ENCODE measurements at regions of chr13 and their contacts with region 1.

Region 1: DNA sequence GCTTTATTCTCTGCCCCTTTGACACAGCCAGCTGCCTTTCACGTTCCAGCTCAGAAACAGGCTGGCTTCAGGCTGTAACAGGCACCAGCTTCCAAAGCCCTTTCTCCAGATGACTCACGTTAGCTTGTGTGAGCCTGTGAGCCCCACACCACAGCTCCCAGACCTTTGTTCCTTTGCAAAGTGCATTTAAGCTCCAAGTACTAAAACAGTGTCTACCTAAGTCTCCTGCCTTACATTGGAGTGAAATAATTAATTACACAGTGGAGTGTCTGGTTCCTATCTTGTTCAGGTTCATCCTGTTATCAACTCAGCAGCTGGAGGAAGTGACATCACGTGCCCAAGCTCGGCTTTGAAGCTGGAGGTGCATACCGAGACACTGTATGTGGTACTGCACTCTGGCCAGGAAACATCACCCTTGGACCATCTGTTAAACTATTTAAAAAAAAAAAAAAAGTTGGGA is 475.8 kb downstream of the FOXO1 start:
- DNase-seq: peak in 8 of 9 donors; percentile 36 to 87 (median 80)
- ATAC-seq: peak; percentile 49
- H3K4me3 ChIP-seq: peak overlapping the region; percentile 24
- H3K4me3 Mint-ChIP-seq: peak overlapping the region; percentile 74 to 89 (median 81)
- H3K27ac ChIP-seq: peak overlapping the region; percentile 63
- H3K27ac Mint-ChIP-seq: peak overlapping the region; percentile 96 to 100 (median 97)
- H3K4me1 ChIP-seq: peaks cover 55 to 69% of the 10 kb centered on the region in 2 donors
- H3K4me1 Mint-ChIP-seq: peaks cover 47 to 97% (median 87%) of the 10 kb centered on the region in 7 donors
- H3K27me3 ChIP-seq: no peaks in the 10 kb centered on the region
- H3K27me3 Mint-ChIP-seq: no peaks in the 10 kb centered on the region

Region 2: GRCh38 chr13:39876258-39876657 is 314.4 kb before region 1 on chr13:
- CTCF ChIA-PET with region 1: no interaction called
- POLR2A ChIA-PET with region 1: no interaction called
- intact Hi-C with region 1: no loop called
- DNase-seq: no peak
- ATAC-seq: no peak
- H3K4me3 ChIP-seq: no peak overlapping the region
- H3K4me3 Mint-ChIP-seq: no peak overlapping the region
- H3K27ac ChIP-seq: no peak overlapping the region
- H3K27ac Mint-ChIP-seq: no peak overlapping the region
- H3K4me1 ChIP-seq: no peaks in the 10 kb centered on the region
- H3K4me1 Mint-ChIP-seq: peaks cover 0 to 10% (median 9%) of the 10 kb centered on the region in 7 donors
- H3K27me3 ChIP-seq: no peaks in the 10 kb centered on the region
- H3K27me3 Mint-ChIP-seq: peaks cover 0 to 3% (median 2%) of the 10 kb centered on the region in 5 donors

Region 3: GRCh38 chr13:39942552-39943273 is 248.0 kb before region 1 on chr13:
- CTCF ChIA-PET with region 1: interaction called, 3 read pairs
- POLR2A ChIA-PET with region 1: interaction called, 3 read pairs
- intact Hi-C with region 1: loop called in 1 of 2 experiments (anchors 1 kb)
- DNase-seq: peak; percentile 41 to 71 (median 63)
- ATAC-seq: peak; percentile 98
- H3K4me3 ChIP-seq: no peak overlapping the region
- H3K4me3 Mint-ChIP-seq: peak overlapping the region in 2 of 10 donors; percentile 2 to 71
- H3K27ac ChIP-seq: no peak overlapping the region
- H3K27ac Mint-ChIP-seq: peak overlapping the region in 3 of 9 donors; percentile 1 to 63 (median 8)
- H3K4me1 ChIP-seq: no peaks in the 10 kb centered on the region
- H3K4me1 Mint-ChIP-seq: peaks cover 4 to 16% (median 11%) of the 10 kb centered on the region in 7 donors
- H3K27me3 ChIP-seq: no peaks in the 10 kb centered on the region
- H3K27me3 Mint-ChIP-seq: peaks cover 0 to 3% (median 0%) of the 10 kb centered on the region in 5 donors

Region 4: GRCh38 chr13:40126306-40127085 is 64.2 kb before region 1 on chr13:
- CTCF ChIA-PET with region 1: no interaction called
- POLR2A ChIA-PET with region 1: no interaction called
- intact Hi-C with region 1: loop called in 1 of 2 experiments (anchors 2 kb)
- DNase-seq: peak in 1 of 9 donors; percentile 16
- ATAC-seq: no peak
- H3K4me3 ChIP-seq: no peak overlapping the region
- H3K4me3 Mint-ChIP-seq: peak overlapping the region in 8 of 10 donors; percentile 5 to 78 (median 45)
- H3K27ac ChIP-seq: no peak overlapping the region
- H3K27ac Mint-ChIP-seq: peak overlapping the region in 4 of 9 donors; percentile 6 to 76 (median 30)
- H3K4me1 ChIP-seq: peaks cover 6 to 16% of the 10 kb centered on the region in 2 donors
- H3K4me1 Mint-ChIP-seq: peaks cover 24 to 60% (median 29%) of the 10 kb centered on the region in 7 donors
- H3K27me3 ChIP-seq: no peaks in the 10 kb centered on the region
- H3K27me3 Mint-ChIP-seq: no peaks in the 10 kb centered on the region

Region 5: DNA sequence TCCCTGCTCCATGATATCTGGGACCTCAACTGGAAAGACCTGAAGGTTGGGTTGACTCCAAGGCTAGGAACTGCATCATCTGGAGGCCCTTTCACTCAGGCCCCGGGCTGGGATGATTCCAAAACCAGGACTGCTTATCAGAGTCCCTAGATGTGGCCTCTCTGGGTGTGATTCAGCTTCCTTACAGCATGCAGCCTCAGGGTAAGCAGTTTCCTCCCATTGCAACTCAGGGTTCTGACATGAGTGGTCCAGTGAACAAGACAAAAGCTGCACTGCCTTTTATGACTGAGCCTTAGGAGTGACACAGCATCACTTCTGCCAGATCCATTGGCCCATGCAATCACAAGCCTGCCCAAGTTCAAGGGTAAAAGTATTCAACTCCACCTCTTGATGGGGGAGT is 32.5 kb before region 1 on chr13:
- CTCF ChIA-PET with region 1: no interaction called
- POLR2A ChIA-PET with region 1: no interaction called
- intact Hi-C with region 1: no loop called
- DNase-seq: no peak
- ATAC-seq: no peak
- H3K4me3 ChIP-seq: no peak overlapping the region
- H3K4me3 Mint-ChIP-seq: no peak overlapping the region
- H3K27ac ChIP-seq: no peak overlapping the region
- H3K27ac Mint-ChIP-seq: no peak overlapping the region
- H3K4me1 ChIP-seq: peaks cover 0 to 13% of the 10 kb centered on the region in 2 donors
- H3K4me1 Mint-ChIP-seq: peaks cover 5 to 22% (median 13%) of the 10 kb centered on the region in 7 donors
- H3K27me3 ChIP-seq: no peaks in the 10 kb centered on the region
- H3K27me3 Mint-ChIP-seq: no peaks in the 10 kb centered on the region

Region 6: DNA sequence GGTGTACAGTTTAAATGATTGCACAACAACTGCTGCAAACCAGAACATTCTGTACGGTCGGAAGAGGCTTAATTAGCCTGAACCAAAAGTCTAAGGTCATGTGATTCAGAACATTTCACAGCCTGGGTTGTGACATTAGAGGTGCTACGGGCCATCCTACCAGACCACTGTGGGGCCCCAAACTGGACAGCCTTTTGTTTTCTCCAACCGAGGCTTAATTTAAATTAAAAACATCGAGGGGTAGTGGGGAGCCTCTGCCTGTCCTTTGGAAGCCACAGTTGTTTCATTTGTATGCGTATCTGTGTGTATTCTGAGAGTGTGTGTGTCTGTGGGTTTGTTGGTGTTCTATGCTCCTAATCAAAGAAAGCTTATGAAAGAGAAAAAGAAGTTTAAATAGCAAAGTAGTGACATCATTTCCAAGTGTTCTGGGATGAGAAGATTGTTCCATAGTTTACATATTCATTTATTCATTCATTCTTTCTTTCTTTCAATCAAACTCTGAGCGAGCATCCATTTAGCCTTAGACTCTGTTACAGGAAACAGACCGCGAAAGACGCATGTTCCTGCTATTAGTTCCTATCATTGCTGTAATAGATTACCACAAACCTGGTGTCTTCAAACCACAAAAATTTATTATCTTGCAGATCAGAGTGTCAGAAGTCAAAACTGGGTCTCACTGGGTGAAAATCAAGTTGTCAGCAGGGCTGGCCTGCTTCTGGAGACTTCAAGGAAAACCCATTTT is 31.0 kb after region 1 on chr13:
- CTCF ChIA-PET with region 1: interaction called, 5 read pairs
- POLR2A ChIA-PET with region 1: interaction called, 5 read pairs
- intact Hi-C with region 1: loop called (anchors 1 kb)
- DNase-seq: peak in 7 of 9 donors; percentile 61 to 86 (median 77)
- ATAC-seq: peak; percentile 88
- H3K4me3 ChIP-seq: peak overlapping the region; percentile 27
- H3K4me3 Mint-ChIP-seq: peak overlapping the region; percentile 32 to 73 (median 66)
- H3K27ac ChIP-seq: peak overlapping the region; percentile 59
- H3K27ac Mint-ChIP-seq: peak overlapping the region; percentile 74 to 96 (median 90)
- H3K4me1 ChIP-seq: peaks cover 31 to 37% of the 10 kb centered on the region in 2 donors
- H3K4me1 Mint-ChIP-seq: peaks cover 22 to 70% (median 49%) of the 10 kb centered on the region in 7 donors
- H3K27me3 ChIP-seq: no peaks in the 10 kb centered on the region
- H3K27me3 Mint-ChIP-seq: no peaks in the 10 kb centered on the region

Region 7: GRCh38 chr13:40433577-40433976 is 242.9 kb after region 1 on chr13:
- CTCF ChIA-PET with region 1: no interaction called
- POLR2A ChIA-PET with region 1: interaction called, 3 read pairs
- intact Hi-C with region 1: loop called (anchors 2 to 5 kb)
- DNase-seq: peak in 6 of 9 donors; percentile 8 to 35 (median 25)
- ATAC-seq: peak; percentile 74
- H3K4me3 ChIP-seq: no peak overlapping the region
- H3K4me3 Mint-ChIP-seq: peak overlapping the region in 8 of 10 donors; percentile 4 to 68 (median 62)
- H3K27ac ChIP-seq: no peak overlapping the region
- H3K27ac Mint-ChIP-seq: peak overlapping the region in 8 of 9 donors; percentile 41 to 94 (median 82)
- H3K4me1 ChIP-seq: peaks cover 24 to 56% of the 10 kb centered on the region in 2 donors
- H3K4me1 Mint-ChIP-seq: peaks cover 29 to 78% (median 69%) of the 10 kb centered on the region in 7 donors
- H3K27me3 ChIP-seq: no peaks in the 10 kb centered on the region
- H3K27me3 Mint-ChIP-seq: no peaks in the 10 kb centered on the region

Region 8: GRCh38 chr13:40666045-40666904 is 475.6 kb after region 1 on chr13 and contains the start of gene FOXO1:
- CTCF ChIA-PET with region 1: interaction called, 3 read pairs
- POLR2A ChIA-PET with region 1: interaction called, 21 read pairs
- intact Hi-C with region 1: loop called (anchors 1 kb)
- DNase-seq: peak; percentile 89 to 98 (median 94)
- ATAC-seq: peak; percentile 87
- H3K4me3 ChIP-seq: peak within 1 kb of the TSS; percentile 84
- H3K4me3 Mint-ChIP-seq: peak within 1 kb of the TSS; percentile 90 to 98 (median 94)
- H3K27ac ChIP-seq: peak within 1 kb of the TSS; percentile 93
- H3K27ac Mint-ChIP-seq: peak within 1 kb of the TSS; percentile 91 to 99 (median 92)
- H3K4me1 ChIP-seq: peaks cover 12 to 19% of the 10 kb centered on the region in 2 donors
- H3K4me1 Mint-ChIP-seq: peaks cover 28 to 51% (median 47%) of the 10 kb centered on the region in 7 donors
- H3K27me3 ChIP-seq: no peaks in the 10 kb centered on the region
- H3K27me3 Mint-ChIP-seq: no peaks in the 10 kb centered on the region
- total RNA-seq, gene FOXO1: 36.4 to 97.6 (median 93.7) TPM

Region 9: GRCh38 chr13:40982772-40983171 is 792.1 kb after region 1 on chr13:
- CTCF ChIA-PET with region 1: no interaction called
- POLR2A ChIA-PET with region 1: no interaction called
- intact Hi-C with region 1: loop called in 1 of 2 experiments (anchors 5 kb)
- DNase-seq: peak in 8 of 9 donors; percentile 41 to 90 (median 80)
- ATAC-seq: peak; percentile 82
- H3K4me3 ChIP-seq: no peak overlapping the region
- H3K4me3 Mint-ChIP-seq: peak overlapping the region; percentile 76 to 99 (median 94)
- H3K27ac ChIP-seq: peak overlapping the region; percentile 86
- H3K27ac Mint-ChIP-seq: peak overlapping the region; percentile 93 to 98 (median 96)
- H3K4me1 ChIP-seq: peaks cover 30 to 34% of the 10 kb centered on the region in 2 donors
- H3K4me1 Mint-ChIP-seq: peaks cover 40 to 77% (median 65%) of the 10 kb centered on the region in 7 donors
- H3K27me3 ChIP-seq: no peaks in the 10 kb centered on the region
- H3K27me3 Mint-ChIP-seq: no peaks in the 10 kb centered on the region

Region 10: DNA sequence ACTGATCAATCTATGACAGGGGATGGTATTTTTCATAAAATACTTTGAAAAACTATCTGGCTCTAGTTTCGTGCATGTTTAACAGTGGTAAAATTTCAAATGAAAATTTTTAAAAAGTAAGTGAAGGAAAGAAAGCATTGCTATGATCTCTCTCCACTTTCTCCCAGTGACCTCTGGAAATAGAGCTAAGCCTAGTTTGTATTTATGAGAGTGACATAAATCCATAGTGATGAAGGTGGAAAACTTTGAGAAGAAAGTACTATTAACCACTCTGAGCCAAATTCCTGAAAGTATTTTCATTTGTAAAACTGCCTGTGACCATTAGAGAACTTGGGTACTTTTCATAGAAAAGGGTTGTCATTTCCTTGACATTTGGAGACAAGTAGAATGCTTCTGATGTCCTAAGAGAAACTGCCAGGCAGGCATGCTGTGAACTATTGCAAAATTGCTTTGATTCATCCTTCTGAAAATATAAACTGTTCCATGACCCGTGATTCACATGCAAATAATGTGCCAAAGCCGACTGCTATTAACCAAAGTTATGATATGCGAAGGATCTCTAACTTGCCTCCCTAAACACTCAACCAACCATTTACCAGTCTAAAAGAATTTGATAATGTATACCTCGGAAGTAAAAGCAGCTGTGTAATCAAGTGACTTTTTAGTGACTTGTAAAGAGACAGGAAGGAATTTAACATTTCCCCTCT is 1637.0 kb after region 1 on chr13:
- CTCF ChIA-PET with region 1: no interaction called
- POLR2A ChIA-PET with region 1: no interaction called
- intact Hi-C with region 1: no loop called
- DNase-seq: no peak
- ATAC-seq: no peak
- H3K4me3 ChIP-seq: no peak overlapping the region
- H3K4me3 Mint-ChIP-seq: no peak overlapping the region
- H3K27ac ChIP-seq: no peak overlapping the region
- H3K27ac Mint-ChIP-seq: no peak overlapping the region
- H3K4me1 ChIP-seq: no peaks in the 10 kb centered on the region
- H3K4me1 Mint-ChIP-seq: peaks cover 0 to 2% (median 0%) of the 10 kb centered on the region in 7 donors
- H3K27me3 ChIP-seq: no peaks in the 10 kb centered on the region
- H3K27me3 Mint-ChIP-seq: no peaks in the 10 kb centered on the region

Region 11: GRCh38 chr13:41985788-41986508 is 1795.3 kb after region 1 on chr13:
- CTCF ChIA-PET with region 1: no interaction called
- POLR2A ChIA-PET with region 1: no interaction called
- intact Hi-C with region 1: no loop called
- DNase-seq: no peak
- ATAC-seq: no peak
- H3K4me3 ChIP-seq: no peak overlapping the region
- H3K4me3 Mint-ChIP-seq: no peak overlapping the region
- H3K27ac ChIP-seq: no peak overlapping the region
- H3K27ac Mint-ChIP-seq: no peak overlapping the region
- H3K4me1 ChIP-seq: no peaks in the 10 kb centered on the region
- H3K4me1 Mint-ChIP-seq: peaks cover 0 to 1% (median 0%) of the 10 kb centered on the region in 7 donors
- H3K27me3 ChIP-seq: no peaks in the 10 kb centered on the region
- H3K27me3 Mint-ChIP-seq: peaks cover 0 to 26% (median 24%) of the 10 kb centered on the region in 5 donors